ENCODE measurements at regions of chr5 and their contacts with region 1.

Region 1: DNA sequence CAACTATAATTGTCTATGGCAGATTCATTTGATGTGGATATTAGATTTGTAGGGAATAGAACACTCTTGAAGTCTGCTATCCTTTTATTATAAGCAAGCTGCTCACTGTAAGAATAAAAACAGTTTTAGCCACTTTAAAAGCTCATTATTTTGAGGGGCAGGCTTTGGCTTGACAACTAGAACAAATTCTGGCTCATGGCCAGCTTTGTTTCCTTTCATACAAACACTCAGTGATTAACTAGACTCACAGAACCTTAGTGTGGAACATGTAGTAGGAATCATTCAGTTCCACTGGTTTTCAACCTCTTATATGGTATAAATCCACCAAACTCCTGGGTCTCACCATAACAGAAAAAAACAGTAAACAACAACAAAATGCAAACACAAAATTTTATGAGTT is 27.4 kb upstream of the CEP120 start:
- DNase-seq: no peak
- H3K4me3 Mint-ChIP-seq: no peak overlapping the region
- H3K27ac Mint-ChIP-seq: no peak overlapping the region
- H3K4me1 Mint-ChIP-seq: peaks cover 27% of the 10 kb centered on the region
- H3K27me3 Mint-ChIP-seq: peaks cover 8% of the 10 kb centered on the region

Region 2: GRCh38 chr5:123438902-123439301 is 11.7 kb before region 1 on chr5:
- CTCF ChIA-PET with region 1: interaction called, 4 read pairs
- POLR2A ChIA-PET with region 1: interaction called, 10 read pairs
- intact Hi-C with region 1: loop called (anchors 1 kb)
- DNase-seq: peak; percentile 51
- H3K4me3 Mint-ChIP-seq: no peak overlapping the region
- H3K27ac Mint-ChIP-seq: peak overlapping the region; percentile 67
- H3K4me1 Mint-ChIP-seq: peaks cover 31% of the 10 kb centered on the region
- H3K27me3 Mint-ChIP-seq: no peaks in the 10 kb centered on the region

Region 3: DNA sequence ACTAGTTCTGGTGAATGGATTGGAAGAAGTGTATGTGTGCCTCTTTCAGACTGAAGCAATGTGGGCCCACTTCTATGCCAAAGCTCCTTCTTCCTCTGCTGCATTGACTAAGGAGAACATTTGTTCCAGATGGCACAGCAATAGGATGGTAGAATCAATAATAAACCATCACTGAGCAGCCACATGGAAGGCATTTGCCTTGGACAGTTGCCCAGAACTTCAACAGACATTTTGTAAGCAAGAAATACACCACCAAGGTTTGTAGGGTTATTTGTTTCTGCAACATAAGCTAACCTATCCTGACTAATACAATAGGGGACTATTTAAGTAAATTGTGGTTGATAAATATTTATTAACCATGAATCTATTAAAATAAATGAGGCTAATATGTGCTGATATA is 23.6 kb after region 1 on chr5:
- CTCF ChIA-PET with region 1: no interaction called
- POLR2A ChIA-PET with region 1: no interaction called
- intact Hi-C with region 1: no loop called
- DNase-seq: no peak
- H3K4me3 Mint-ChIP-seq: no peak overlapping the region
- H3K27ac Mint-ChIP-seq: no peak overlapping the region
- H3K4me1 Mint-ChIP-seq: no peaks in the 10 kb centered on the region
- H3K27me3 Mint-ChIP-seq: peaks cover 10% of the 10 kb centered on the region

Region 4: GRCh38 chr5:123545506-123545905 is 94.9 kb after region 1 on chr5:
- CTCF ChIA-PET with region 1: no interaction called
- POLR2A ChIA-PET with region 1: no interaction called
- intact Hi-C with region 1: loop called (anchors 1 kb)
- DNase-seq: peak; percentile 22
- H3K4me3 Mint-ChIP-seq: no peak overlapping the region
- H3K27ac Mint-ChIP-seq: no peak overlapping the region
- H3K4me1 Mint-ChIP-seq: peaks cover 60% of the 10 kb centered on the region
- H3K27me3 Mint-ChIP-seq: no peaks in the 10 kb centered on the region

Region 5: DNA sequence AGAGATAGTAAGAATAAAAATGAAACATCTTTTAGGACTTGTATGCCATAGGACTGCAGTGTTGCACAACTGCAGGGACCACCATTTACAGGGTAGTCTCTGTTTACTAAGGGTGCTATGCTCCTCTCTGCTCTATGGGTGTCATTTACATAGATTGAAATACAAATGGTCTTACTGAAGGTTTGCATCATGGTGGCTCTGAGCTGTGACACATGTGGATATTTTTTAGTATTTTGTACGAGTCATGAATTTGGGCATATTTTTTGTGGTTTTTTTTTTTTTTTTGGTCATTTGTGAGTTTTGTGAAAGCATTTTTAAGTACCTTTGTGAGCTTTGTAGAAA is 108.8 kb after region 1 on chr5:
- CTCF ChIA-PET with region 1: no interaction called
- POLR2A ChIA-PET with region 1: no interaction called
- intact Hi-C with region 1: loop called (anchors 1 kb)
- DNase-seq: no peak
- H3K4me3 Mint-ChIP-seq: no peak overlapping the region
- H3K27ac Mint-ChIP-seq: no peak overlapping the region
- H3K4me1 Mint-ChIP-seq: peaks cover 21% of the 10 kb centered on the region
- H3K27me3 Mint-ChIP-seq: no peaks in the 10 kb centered on the region

Region 6: DNA sequence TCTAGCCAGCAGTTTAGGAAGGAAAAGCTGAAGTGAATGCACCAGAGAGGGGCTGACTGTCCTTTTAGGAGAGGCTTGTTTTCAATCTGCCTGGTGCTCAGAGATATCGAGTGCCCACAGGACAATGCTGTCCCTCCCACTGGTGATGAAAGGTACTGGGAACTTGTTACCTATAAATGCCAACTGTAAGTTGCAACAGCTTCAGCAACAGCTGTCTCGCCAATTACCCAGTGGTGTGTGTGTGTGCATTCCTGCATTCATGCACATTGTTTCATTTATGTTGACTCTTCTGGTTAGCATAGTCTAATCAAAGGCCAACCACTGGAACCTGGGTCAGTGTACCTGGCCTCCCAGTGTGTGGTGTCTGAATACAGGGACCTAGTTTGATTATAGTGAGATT is 222.5 kb after region 1 on chr5:
- CTCF ChIA-PET with region 1: no interaction called
- POLR2A ChIA-PET with region 1: no interaction called
- intact Hi-C with region 1: no loop called
- DNase-seq: no peak
- H3K4me3 Mint-ChIP-seq: no peak overlapping the region
- H3K27ac Mint-ChIP-seq: no peak overlapping the region
- H3K4me1 Mint-ChIP-seq: no peaks in the 10 kb centered on the region
- H3K27me3 Mint-ChIP-seq: no peaks in the 10 kb centered on the region

Region 7: DNA sequence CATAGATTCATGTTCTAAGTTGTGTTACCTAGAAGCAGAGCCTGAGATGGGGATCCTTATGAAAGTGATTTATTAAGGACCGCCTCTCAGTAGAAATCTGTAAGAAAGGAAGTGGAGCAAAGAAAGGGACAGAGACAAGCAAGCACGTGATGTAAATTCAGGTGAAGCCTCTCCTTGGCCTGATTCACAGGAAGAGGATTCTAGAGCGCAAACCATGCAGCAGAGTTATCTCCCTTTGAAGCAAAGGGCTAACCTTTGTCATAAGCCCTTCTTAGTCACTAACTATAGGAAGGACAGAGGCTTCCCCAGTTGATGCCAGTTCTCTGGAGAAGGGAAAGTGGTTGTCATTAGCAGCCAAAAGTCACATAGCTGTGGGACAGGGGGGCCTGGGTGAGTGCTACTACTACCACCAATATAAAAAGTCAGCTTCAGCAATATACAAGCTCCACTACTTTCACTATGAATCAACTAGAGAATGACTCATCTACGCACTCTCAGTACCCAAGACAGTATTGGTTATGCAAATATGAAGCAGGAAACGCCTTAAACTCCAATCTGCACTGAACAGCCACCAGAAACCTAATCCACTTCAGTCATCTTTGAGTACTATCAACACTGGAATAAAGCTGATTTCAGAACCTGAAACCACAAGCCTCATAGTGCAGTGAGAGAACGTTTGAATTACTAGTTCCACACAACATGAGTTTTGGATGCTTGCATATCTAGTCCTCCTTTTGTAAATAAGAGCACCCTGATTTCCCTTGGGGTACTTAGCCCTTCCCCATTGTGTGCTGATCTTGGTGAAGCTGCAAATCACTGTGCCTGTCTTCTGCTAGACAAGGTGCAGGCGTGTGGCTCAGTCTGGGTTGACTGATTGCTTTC is 1133.1 kb after region 1 on chr5:
- CTCF ChIA-PET with region 1: no interaction called
- POLR2A ChIA-PET with region 1: no interaction called
- intact Hi-C with region 1: loop called (anchors 5 kb)
- DNase-seq: peak; percentile 38
- H3K4me3 Mint-ChIP-seq: no peak overlapping the region
- H3K27ac Mint-ChIP-seq: no peak overlapping the region
- H3K4me1 Mint-ChIP-seq: peaks cover 13% of the 10 kb centered on the region
- H3K27me3 Mint-ChIP-seq: peaks cover 2% of the 10 kb centered on the region

Measured in activated CD4-positive, alpha-beta memory T cell treated with anti-CD3 and anti-CD28 coated beads for 36 hours (primary cell).